ENCODE measurements at regions of chr4 and their contacts with region 1.

Region 1: GRCh38 chr4:101191302-101192098 is 155.8 kb downstream of the PPP3CA start:
- DNase-seq: peak; percentile 73 to 83
- H3K4me3 ChIP-seq: no peak overlapping the region
- H3K27ac ChIP-seq: peak overlapping the region; percentile 57 to 82 (median 72)
- H3K4me1 ChIP-seq: peaks cover 8 to 47% (median 25%) of the 10 kb centered on the region in 4 donors
- H3K27me3 ChIP-seq: no peaks in the 10 kb centered on the region
- CTCF ChIP-seq: no peak
- EP300 ChIP-seq: peak; percentile 91
- POLR2A ChIP-seq: no peak

Region 2: DNA sequence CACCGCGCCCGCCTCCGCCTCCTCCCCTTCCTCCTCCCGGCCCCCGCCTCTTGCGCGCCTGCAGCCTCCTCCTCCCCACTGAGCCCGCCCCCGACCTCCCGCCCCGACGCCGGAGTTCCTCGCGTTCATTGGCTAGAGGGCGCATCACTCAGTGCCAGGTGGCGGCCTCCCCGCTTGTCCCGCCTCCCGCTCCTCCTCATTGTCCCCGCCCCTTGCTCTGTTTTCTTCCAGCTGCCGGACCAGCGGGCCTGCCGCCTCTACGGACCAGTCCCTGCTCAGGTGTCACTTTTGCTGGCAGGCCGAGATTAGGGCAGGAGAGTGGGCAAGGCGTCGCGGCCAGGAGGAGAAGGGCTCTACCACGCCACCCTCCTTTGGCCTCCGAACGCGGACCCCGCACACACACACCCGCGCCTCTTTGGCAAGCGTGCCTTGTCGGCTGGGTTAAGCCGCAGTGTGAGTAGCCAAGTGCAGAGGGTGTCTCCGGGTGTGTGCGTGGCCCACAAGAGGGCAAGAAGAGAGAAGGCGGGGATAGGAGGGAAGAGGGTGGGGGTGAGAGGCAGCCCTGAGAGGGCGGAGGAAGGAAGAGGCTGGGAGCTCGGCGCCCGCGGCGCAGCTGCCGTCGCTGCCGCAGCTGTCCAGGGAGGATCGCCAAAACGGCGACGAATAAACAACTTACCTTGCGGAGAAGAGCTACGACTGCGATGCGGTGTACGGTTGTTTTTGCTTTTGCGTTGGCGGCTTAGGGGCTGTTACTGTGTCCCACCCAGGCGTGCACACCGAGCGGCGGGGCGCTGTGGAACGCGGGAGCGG is 156.3 kb after region 1 on chr4:
- intact Hi-C with region 1: loop called (anchors 10 kb)
- DNase-seq: peak; percentile 99 to 100
- H3K4me3 ChIP-seq: peak overlapping the region; percentile 83 to 92 (median 87)
- H3K27ac ChIP-seq: peak overlapping the region; percentile 95 to 98 (median 97)
- H3K4me1 ChIP-seq: peaks cover 12 to 49% (median 39%) of the 10 kb centered on the region in 4 donors
- H3K27me3 ChIP-seq: no peaks in the 10 kb centered on the region
- CTCF ChIP-seq: peak in 1 of 7 experiments; percentile 26
- EP300 ChIP-seq: no peak
- POLR2A ChIP-seq: peak in 1 of 4 donors; percentile 62